SK-N-SH (cell line): ENCODE measurements at regions of chr19 and their contacts with region 1.

Region 1: DNA sequence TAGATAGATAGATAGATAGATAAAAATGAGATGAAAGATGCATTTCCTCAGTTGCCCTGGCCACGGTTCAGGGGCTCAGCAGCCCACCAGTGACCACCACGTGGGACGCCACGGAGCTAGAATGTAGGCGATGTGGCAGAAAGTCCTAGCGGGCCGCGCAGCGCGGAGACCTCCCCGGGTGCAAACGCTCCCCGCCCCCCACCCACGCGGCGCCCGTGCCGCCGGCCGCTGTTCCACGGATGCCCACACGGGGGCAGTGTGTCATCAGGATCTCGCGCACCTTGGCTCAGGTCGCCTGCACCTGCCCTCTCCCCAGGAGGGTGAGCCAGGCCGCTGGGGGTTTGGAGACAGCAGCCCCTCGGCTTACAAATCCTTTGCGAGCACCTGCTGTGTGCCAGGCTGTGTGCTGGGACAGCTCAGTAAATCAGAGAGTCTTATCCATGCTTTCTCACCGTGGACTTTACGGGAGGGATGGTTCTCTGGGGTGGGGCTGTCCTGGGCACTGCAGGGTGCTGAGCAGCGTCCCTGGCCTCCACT is 13.7 kb upstream of the TLE5 start:
- DNase-seq: peak; percentile 89
- H3K4me3 ChIP-seq: peak overlapping the region; percentile 24 to 57; a peak in 3 of 4 replicates
- H3K27ac ChIP-seq: no peak overlapping the region
- H3K4me1 ChIP-seq: peaks cover 0 to 3% of the 10 kb centered on the region in 2 experiments; a peak in 1 of 4 replicates
- H3K27me3 ChIP-seq: no peaks in the 10 kb centered on the region
- CTCF ChIP-seq: peak; percentile 93
- EP300 ChIP-seq: no peak
- RAD21 ChIP-seq: peak; percentile 77

Region 2: GRCh38 chr19:3035542-3036118 is 40.3 kb before region 1 on chr19:
- CTCF ChIA-PET with region 1: interaction called, 10 read pairs
- POLR2A ChIA-PET with region 1: no interaction called
- DNase-seq: peak; percentile 98
- H3K4me3 ChIP-seq: peak overlapping the region; percentile 49 to 69
- H3K27ac ChIP-seq: peak overlapping the region; percentile 74 to 83
- H3K4me1 ChIP-seq: peaks cover 0 to 14% of the 10 kb centered on the region in 2 experiments; a peak in 1 of 4 replicates
- H3K27me3 ChIP-seq: peaks cover 31% of the 10 kb centered on the region
- CTCF ChIP-seq: no peak
- EP300 ChIP-seq: peak; percentile 22 to 25; a peak in 1 of 4 replicates
- RAD21 ChIP-seq: no peak

Region 3: GRCh38 chr19:3087769-3088168 is 11.8 kb after region 1 on chr19:
- CTCF ChIA-PET with region 1: interaction called, 23 read pairs
- POLR2A ChIA-PET with region 1: no interaction called
- DNase-seq: no peak
- H3K4me3 ChIP-seq: no peak overlapping the region
- H3K27ac ChIP-seq: no peak overlapping the region
- H3K4me1 ChIP-seq: no peaks in the 10 kb centered on the region
- H3K27me3 ChIP-seq: no peaks in the 10 kb centered on the region
- CTCF ChIP-seq: no peak
- EP300 ChIP-seq: no peak
- RAD21 ChIP-seq: no peak

Region 4: DNA sequence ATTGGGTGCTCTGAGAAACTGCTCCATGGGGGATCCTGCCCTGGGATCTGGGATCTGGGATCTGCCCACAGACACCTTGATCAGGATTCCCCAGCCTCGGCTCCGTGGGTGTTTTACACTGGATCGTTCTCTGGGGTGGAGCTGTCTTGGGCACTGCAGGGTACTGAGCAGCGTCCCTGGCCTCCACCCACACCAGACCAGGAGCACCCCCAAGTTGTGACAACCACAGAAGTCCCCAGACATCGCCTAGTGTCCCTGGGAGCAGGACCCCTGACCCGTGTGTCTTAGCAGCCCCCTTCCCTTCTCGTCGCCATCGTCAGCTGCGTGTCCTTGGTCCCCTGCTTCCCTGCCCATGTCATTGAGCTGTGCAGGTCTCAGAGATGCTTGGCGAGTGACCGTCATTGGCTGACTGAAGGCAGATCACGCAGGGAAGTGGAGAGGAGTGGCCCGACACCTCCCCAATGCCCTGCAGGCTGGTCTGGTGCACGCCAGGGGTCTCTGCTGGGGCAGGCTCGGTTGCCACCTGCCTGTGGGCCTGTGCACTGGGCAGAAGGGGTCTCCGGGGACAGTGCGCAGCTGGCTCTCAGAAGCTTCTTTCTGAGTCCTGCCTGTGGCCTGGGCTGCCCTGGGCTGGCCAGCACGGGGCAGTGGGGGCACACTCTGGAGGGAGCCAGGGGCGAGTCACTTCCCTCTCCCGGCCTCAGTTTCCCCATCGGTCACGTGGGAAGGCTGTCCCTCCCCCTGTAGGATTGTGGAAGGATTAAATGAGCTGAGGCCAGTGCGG is 24.3 kb after region 1 on chr19:
- CTCF ChIA-PET with region 1: interaction called, 124 read pairs
- POLR2A ChIA-PET with region 1: no interaction called
- DNase-seq: no peak
- H3K4me3 ChIP-seq: no peak overlapping the region
- H3K27ac ChIP-seq: no peak overlapping the region
- H3K4me1 ChIP-seq: peaks cover 0 to 23% of the 10 kb centered on the region in 2 experiments; a peak in 1 of 4 replicates
- H3K27me3 ChIP-seq: no peaks in the 10 kb centered on the region
- CTCF ChIP-seq: no peak
- EP300 ChIP-seq: no peak
- RAD21 ChIP-seq: no peak

Region 5: GRCh38 chr19:3125900-3126524 is 50.0 kb after region 1 on chr19:
- CTCF ChIA-PET with region 1: interaction called, 33 read pairs
- POLR2A ChIA-PET with region 1: no interaction called
- DNase-seq: peak; percentile 87
- H3K4me3 ChIP-seq: peak overlapping the region in 1 of 2 experiments; percentile 6; a peak in 1 of 4 replicates
- H3K27ac ChIP-seq: no peak overlapping the region
- H3K4me1 ChIP-seq: no peaks in the 10 kb centered on the region
- H3K27me3 ChIP-seq: no peaks in the 10 kb centered on the region
- CTCF ChIP-seq: peak; percentile 84
- EP300 ChIP-seq: no peak
- RAD21 ChIP-seq: peak; percentile 47